Panc1 (cell line): ENCODE measurements at regions of chr5 and their contacts with region 1.

Region 1: DNA sequence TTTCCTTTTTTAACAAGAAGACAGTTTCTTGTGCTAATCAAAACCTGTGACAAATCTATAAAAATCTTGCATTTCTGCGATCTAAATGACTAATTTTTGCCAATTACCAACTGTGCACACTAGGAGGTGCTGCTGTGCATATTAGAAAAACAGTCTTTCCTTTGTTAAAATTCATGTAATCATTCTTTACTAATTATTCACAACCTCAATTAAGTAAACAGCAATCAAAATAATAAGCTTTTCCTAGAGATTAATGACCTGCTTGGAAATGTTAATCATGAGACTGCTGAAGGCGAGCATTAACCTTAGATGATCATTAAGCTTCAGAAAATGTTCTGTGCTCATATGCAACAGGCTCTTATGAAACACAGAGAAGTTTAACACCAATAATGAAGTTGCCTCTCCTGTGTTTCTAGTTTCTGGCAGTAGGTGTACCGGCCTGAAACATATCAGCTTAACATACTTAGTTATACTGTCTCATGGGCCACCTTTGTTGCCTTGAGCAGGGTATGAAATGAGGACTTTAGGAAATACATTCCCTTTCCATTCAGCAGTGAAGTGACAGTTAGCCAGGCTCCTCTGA is 17.7 kb downstream of the RFESD start:
- DNase-seq: no peak
- ATAC-seq: peak; percentile 60; the same call in 1 of the 2 replicates
- H3K4me3 ChIP-seq: no peak overlapping the region
- H3K27ac ChIP-seq: peak overlapping the region; percentile 78
- H3K4me1 ChIP-seq: peaks cover 7% of the 10 kb centered on the region
- H3K27me3 ChIP-seq: no peaks in the 10 kb centered on the region
- CTCF ChIP-seq: peak; percentile 82

Region 2: GRCh38 chr5:95730730-95731570 is 66.7 kb after region 1 on chr5 and contains the start of gene RHOBTB3:
- CTCF ChIA-PET with region 1: interaction called, 4 read pairs
- POLR2A ChIA-PET with region 1: no interaction called
- in situ Hi-C with region 1: no loop called
- intact Hi-C with region 1: loop called (anchors 5 kb)
- DNase-seq: no peak
- ATAC-seq: peak; percentile 89
- H3K4me3 ChIP-seq: peak within 1 kb of the TSS; percentile 92 to 95
- H3K27ac ChIP-seq: peak within 1 kb of the TSS; percentile 98
- H3K4me1 ChIP-seq: peaks cover 62% of the 10 kb centered on the region
- H3K27me3 ChIP-seq: no peaks in the 10 kb centered on the region
- CTCF ChIP-seq: no peak; the same call in 1 of the 2 replicates
- total RNA-seq, gene RHOBTB3: 95.2 TPM

Region 3: GRCh38 chr5:96037128-96037527 is 372.8 kb after region 1 on chr5:
- CTCF ChIA-PET with region 1: no interaction called
- POLR2A ChIA-PET with region 1: no interaction called
- in situ Hi-C with region 1: no loop called
- intact Hi-C with region 1: no loop called
- DNase-seq: no peak
- ATAC-seq: no peak
- H3K4me3 ChIP-seq: no peak overlapping the region
- H3K27ac ChIP-seq: no peak overlapping the region
- H3K4me1 ChIP-seq: no peaks in the 10 kb centered on the region
- H3K27me3 ChIP-seq: no peaks in the 10 kb centered on the region
- CTCF ChIP-seq: no peak